CD8-positive, alpha-beta T cell (primary cell): ENCODE measurements at regions of chr17 and their contacts with region 1.

Region 1: GRCh38 chr17:16438557-16439302 is 23.4 kb downstream of the TRPV2 start:
- DNase-seq: peak; percentile 89 to 99 (median 93)
- ATAC-seq: peak; percentile 80
- H3K4me3 ChIP-seq: peak overlapping the region; percentile 88 to 91
- H3K4me3 Mint-ChIP-seq: peak overlapping the region; percentile 99
- H3K27ac ChIP-seq: peak overlapping the region; percentile 88 to 90
- H3K27ac Mint-ChIP-seq: peak overlapping the region; percentile 99
- H3K4me1 ChIP-seq: peaks cover 34% of the 10 kb centered on the region
- H3K4me1 Mint-ChIP-seq: peaks cover 46% of the 10 kb centered on the region
- H3K27me3 ChIP-seq: no peaks in the 10 kb centered on the region
- H3K27me3 Mint-ChIP-seq: no peaks in the 10 kb centered on the region
- CTCF ChIP-seq: no peak

Region 2: DNA sequence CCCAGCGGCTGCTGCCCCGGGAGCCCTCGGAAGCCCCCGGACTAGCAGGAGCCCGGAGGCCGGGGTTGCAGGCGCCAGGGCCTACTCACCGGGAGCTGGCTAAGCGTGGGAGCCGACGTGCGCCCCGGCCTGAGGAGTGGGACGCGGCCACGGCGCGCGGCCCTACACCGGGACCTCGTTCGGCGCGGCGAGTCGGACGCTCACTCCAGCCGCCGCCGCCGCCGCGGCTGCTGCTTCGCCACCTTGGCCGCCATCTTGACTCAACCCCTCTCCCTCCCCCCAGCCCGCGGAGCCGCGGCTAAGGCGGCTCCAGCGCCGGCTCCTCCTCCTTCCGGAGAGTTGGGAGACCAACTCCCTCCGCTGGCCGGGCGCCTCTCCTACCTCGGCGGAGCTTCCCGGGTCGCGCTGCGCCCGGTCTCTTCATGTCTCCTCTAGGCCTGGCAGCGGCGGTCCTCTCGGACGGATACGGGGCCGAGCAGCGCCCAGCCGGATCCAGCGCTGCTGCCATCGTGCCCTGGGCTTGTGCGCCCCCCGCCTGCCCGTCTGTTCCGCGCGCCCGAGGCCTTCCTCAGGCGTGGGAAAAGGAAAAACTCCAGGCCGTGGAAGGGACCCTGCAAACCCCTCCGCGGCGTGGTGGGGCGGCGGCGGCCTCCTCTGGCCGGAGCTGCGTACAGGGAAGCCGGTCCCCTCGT is 223.3 kb before region 1 on chr17 and contains the start of gene NCOR1:
- CTCF ChIA-PET with region 1: no interaction called
- POLR2A ChIA-PET with region 1: interaction called, 4 read pairs
- intact Hi-C with region 1: loop called (anchors 2 to 5 kb)
- DNase-seq: peak; percentile 75 to 94 (median 89)
- ATAC-seq: peak; percentile 87
- H3K4me3 ChIP-seq: peak within 1 kb of the TSS; percentile 70 to 83
- H3K4me3 Mint-ChIP-seq: peak within 1 kb of the TSS; percentile 93
- H3K27ac ChIP-seq: peak within 1 kb of the TSS; percentile 71 to 82
- H3K27ac Mint-ChIP-seq: peak within 1 kb of the TSS; percentile 95
- H3K4me1 ChIP-seq: peaks cover 44% of the 10 kb centered on the region
- H3K4me1 Mint-ChIP-seq: peaks cover 56% of the 10 kb centered on the region
- H3K27me3 ChIP-seq: no peaks in the 10 kb centered on the region
- H3K27me3 Mint-ChIP-seq: no peaks in the 10 kb centered on the region
- CTCF ChIP-seq: no peak
- total RNA-seq, gene NCOR1: 119 TPM

Region 3: DNA sequence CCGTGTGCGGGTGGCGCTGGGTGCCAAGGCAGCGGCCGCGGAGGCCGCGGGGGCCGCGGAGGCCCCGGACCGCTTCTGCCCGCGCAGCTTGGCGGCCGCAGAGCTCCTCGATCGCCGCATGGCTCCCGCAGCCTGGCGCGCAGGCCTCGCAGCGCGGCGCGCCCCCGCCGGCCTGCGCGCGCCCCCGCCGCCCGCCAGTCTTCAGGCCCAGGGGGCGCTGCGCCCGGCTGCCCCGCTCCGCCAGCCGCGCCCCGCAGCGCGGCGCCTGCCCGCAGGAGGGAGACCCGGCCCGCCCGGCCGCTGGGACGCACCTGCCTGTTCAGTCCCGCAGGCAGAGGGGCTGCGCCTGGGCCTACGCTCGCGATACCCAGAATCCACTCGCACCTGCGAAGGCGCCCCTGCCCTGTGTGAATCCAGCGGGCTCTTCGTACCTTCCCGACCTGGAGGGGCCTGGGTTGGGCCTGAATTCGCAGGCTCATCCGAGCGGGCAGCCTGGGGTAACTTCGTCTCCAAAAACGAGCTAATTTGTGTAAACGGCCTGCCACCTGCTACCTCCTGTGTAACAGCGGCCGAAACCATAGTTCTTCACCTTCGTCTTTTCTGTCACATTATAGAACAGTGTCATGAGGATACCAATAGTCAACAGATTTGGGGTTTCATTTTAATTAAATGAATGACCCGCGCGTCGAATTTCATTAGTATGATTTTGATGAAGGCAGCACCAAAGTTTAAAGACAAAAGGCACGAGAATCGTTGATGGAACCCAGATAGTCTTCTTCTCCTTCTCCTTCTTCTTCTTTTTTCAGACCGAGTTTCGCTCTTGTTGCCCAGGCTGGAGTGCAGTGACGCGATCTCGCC is 85.2 kb before region 1 on chr17 and contains the start of gene CENPV:
- CTCF ChIA-PET with region 1: no interaction called
- POLR2A ChIA-PET with region 1: interaction called, 5 read pairs
- intact Hi-C with region 1: loop called (anchors 1 to 2 kb)
- DNase-seq: peak; percentile 28 to 86 (median 70)
- ATAC-seq: peak; percentile 85
- H3K4me3 ChIP-seq: peak within 1 kb of the TSS; percentile 63 to 79
- H3K4me3 Mint-ChIP-seq: peak within 1 kb of the TSS; percentile 92
- H3K27ac ChIP-seq: peak within 1 kb of the TSS; percentile 47 to 57
- H3K27ac Mint-ChIP-seq: peak within 1 kb of the TSS; percentile 85
- H3K4me1 ChIP-seq: peaks cover 16% of the 10 kb centered on the region
- H3K4me1 Mint-ChIP-seq: peaks cover 28% of the 10 kb centered on the region
- H3K27me3 ChIP-seq: no peaks in the 10 kb centered on the region
- H3K27me3 Mint-ChIP-seq: no peaks in the 10 kb centered on the region
- CTCF ChIP-seq: no peak
- total RNA-seq, gene CENPV: 28.8 to 31.8 TPM

Region 4: DNA sequence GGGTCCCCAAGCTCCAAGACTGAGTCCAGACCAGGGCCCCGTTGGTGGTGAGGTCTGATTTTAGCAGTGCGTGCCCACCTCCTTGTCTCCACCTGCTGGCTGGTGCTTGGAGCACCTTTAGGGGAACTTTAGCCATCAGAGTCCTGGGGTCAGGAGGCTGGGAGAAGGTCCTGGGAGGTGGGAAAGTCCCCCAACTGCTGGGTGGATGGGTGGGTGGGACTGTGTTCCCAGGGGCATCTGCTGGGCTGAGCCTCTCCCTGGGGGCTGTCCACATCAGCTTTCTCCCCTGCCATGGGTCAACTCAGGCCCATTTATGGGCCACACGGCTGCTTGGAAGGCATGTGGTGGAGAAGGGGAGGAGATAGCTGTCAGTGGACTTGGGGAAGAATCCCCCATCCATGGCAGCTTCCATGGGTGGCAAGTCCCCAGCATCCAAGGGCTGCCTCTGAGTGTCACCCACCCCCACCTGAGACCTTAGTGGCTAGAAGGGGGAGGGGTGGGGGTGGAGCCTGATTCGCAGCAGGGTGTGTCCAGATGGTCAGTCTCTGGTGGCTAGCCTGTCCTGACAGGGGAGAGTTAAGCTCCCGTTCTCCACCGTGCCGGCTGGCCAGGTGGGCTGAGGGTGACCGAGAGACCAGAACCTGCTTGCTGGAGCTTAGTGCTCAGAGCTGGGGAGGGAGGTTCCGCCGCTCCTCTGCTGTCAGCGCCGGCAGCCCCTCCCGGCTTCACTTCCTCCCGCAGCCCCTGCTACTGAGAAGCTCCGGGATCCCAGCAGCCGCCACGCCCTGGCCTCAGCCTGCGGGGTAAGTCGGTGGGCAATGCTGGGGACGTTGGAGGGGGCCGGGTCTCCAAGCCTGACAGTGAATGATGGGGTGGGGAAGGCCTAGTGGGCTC is 23.5 kb before region 1 on chr17 and contains the start of gene TRPV2:
- CTCF ChIA-PET with region 1: interaction called, 6 read pairs
- POLR2A ChIA-PET with region 1: interaction called, 28 read pairs
- intact Hi-C with region 1: loop called (anchors 1 kb)
- DNase-seq: peak; percentile 23 to 78 (median 64)
- ATAC-seq: peak; percentile 47
- H3K4me3 ChIP-seq: peak within 1 kb of the TSS; percentile 95
- H3K4me3 Mint-ChIP-seq: peak within 1 kb of the TSS; percentile 95
- H3K27ac ChIP-seq: peak within 1 kb of the TSS; percentile 85 to 97
- H3K27ac Mint-ChIP-seq: peak within 1 kb of the TSS; percentile 99
- H3K4me1 ChIP-seq: peaks cover 48% of the 10 kb centered on the region
- H3K4me1 Mint-ChIP-seq: peaks cover 52% of the 10 kb centered on the region
- H3K27me3 ChIP-seq: no peaks in the 10 kb centered on the region
- H3K27me3 Mint-ChIP-seq: no peaks in the 10 kb centered on the region
- CTCF ChIP-seq: peak; percentile 52
- total RNA-seq, gene TRPV2: 37.1 to 37.4 TPM

Region 5: GRCh38 chr17:16521070-16521727 is 82.5 kb after region 1 on chr17:
- CTCF ChIA-PET with region 1: interaction called, 11 read pairs
- POLR2A ChIA-PET with region 1: no interaction called
- intact Hi-C with region 1: no loop called
- DNase-seq: peak; percentile 34 to 86 (median 65)
- ATAC-seq: peak; percentile 96
- H3K4me3 ChIP-seq: no peak overlapping the region
- H3K4me3 Mint-ChIP-seq: no peak overlapping the region
- H3K27ac ChIP-seq: no peak overlapping the region
- H3K27ac Mint-ChIP-seq: no peak overlapping the region
- H3K4me1 ChIP-seq: no peaks in the 10 kb centered on the region
- H3K4me1 Mint-ChIP-seq: peaks cover 3% of the 10 kb centered on the region
- H3K27me3 ChIP-seq: peaks cover 0 to 2% of the 10 kb centered on the region in 2 experiments
- H3K27me3 Mint-ChIP-seq: peaks cover 36% of the 10 kb centered on the region
- CTCF ChIP-seq: peak; percentile 93